Right ventricle myocardium inferior (tissue), 1 donor: ENCODE measurements at regions of chr15 and their contacts with region 1.

Region 1: DNA sequence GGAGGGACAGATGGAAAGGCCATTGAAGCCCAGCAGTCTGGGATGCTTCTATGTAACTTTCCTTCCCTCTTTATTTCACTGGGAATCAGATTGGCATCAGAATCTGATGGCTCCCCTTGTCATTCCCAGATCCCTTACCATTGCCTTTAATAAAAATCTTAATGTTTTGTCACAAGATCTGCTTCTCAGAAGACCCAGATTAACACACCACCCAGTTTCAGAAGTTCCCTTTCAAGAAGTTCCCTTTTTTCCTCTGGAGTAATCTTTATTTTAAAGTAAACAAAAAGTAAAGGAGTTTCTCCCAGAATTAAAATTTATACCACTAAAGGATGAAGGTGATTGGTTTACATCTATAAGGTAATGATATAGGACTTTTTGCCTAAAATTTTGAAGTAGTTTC is 76.4 kb downstream of the UBR1 start:
- DNase-seq: no peak
- ATAC-seq: no peak

Region 2: GRCh38 chr15:42955518-42955917 is 74.0 kb before region 1 on chr15:
- intact Hi-C with region 1: loop called (anchors 10 kb)
- DNase-seq: no peak
- ATAC-seq: no peak

Region 3: DNA sequence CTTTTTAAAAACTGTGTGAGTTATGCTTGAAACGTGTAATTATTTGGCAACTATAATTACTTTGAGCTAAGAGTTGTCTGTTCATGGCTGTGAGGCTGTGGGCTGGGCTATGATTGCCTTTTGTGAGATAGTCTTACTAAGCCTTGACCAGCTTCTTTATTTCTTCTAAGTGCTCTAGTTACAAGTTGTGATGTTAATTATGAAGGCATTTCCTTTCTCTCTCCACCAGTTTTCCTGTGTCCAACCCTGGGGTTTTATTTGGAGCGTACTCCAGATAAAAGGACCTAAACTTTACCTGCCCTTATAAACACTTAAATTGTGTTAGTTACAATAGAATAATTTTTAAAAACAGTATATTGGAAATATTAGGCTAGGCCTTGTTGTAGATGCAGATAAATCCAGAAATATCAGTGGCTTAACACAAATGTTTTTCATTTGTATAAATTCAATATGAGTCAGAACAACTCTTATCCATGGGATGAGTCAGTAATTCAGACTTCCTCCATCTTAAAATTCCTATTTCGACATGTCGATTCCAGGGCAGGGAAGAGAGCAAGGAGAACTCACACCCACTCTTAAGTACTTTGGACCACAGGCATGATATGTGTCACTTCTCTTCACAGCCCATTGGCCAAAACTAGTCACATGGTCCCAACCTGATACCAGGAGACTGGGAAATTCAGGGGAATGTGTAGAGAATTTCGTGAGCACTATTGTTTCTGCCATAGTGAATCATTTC is 120.9 kb after region 1 on chr15:
- intact Hi-C with region 1: loop called (anchors 10 kb)
- DNase-seq: no peak
- ATAC-seq: no peak